H1 (cell line): ENCODE measurements at regions of chr6 and their contacts with region 1.

Region 1: GRCh38 chr6:33694401-33694931 is 17.0 kb downstream of the UQCC2 start:
- DNase-seq: no peak
- H3K4me3 ChIP-seq: no peak overlapping the region
- H3K27ac ChIP-seq: no peak overlapping the region
- H3K4me1 ChIP-seq: peaks cover 0 to 10% (median 1%) of the 10 kb centered on the region in 4 experiments; a peak in 4 of 7 replicates
- H3K27me3 ChIP-seq: no peaks in the 10 kb centered on the region
- CTCF ChIP-seq: no peak
- EP300 ChIP-seq: no peak
- POLR2A ChIP-seq: no peak; a peak in 1 of 3 replicates
- RAD21 ChIP-seq: no peak

Region 2: DNA sequence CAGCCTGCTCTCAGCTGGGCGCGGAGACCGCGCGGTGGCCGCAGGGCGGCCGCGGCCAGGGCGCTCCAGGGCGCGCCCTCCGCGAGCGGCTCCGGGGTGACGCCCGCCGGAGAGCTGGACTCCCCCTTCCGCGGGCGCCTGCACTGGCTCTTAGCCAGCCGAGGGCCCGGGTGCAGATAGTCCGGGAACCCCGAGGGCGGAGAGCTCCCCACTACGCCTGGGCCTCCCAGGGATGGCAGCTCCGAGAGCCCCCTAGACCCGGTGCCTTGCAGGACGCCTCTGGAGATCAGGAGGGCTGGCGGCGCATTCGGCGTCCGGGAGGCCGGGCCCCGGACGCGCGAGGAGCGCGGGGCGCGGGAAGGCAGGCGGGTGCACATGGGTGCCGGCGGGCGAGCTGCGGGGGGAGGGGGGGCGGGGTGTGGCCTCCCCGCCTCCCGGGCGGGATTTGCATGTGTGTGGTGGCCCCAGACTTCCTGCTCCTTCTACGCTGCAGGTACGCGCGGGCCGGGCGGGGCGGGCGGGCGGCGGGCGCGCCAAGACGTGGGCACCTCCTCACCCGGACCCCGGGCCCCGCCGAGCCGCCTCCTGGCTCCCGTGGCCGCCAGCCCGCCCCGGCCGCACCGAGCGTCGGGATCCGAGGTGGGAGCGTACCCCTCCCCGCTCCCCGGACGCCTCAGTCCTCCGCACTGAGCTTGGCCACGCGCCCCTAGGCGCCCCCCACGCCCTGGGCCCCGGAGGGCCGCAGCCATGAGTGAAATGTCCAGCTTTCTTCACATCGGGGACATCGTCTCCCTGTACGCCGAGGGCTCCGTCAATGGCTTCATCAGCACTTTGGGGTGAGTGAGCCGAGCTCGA is 73.4 kb before region 1 on chr6 and contains the start of gene ITPR3:
- CTCF ChIA-PET with region 1: no interaction called
- POLR2A ChIA-PET with region 1: interaction called, 10 read pairs
- DNase-seq: peak in 1 of 2 experiments; percentile 79
- H3K4me3 ChIP-seq: peak within 1 kb of the TSS; percentile 70 to 85 (median 80)
- H3K27ac ChIP-seq: no peak within 1 kb of the TSS
- H3K4me1 ChIP-seq: peaks cover 6 to 15% (median 11%) of the 10 kb centered on the region in 4 experiments
- H3K27me3 ChIP-seq: peaks cover 0 to 3% (median 1%) of the 10 kb centered on the region in 4 experiments; a peak in 3 of 7 replicates
- CTCF ChIP-seq: no peak
- EP300 ChIP-seq: no peak
- POLR2A ChIP-seq: no peak
- RAD21 ChIP-seq: no peak
- total RNA-seq, gene ITPR3: 44.9 and 45.7 TPM in 2 replicates

Region 3: GRCh38 chr6:33665957-33666356 is 28.5 kb before region 1 on chr6:
- CTCF ChIA-PET with region 1: interaction called, 13 read pairs
- POLR2A ChIA-PET with region 1: interaction called, 3 read pairs
- DNase-seq: no peak
- H3K4me3 ChIP-seq: no peak overlapping the region
- H3K27ac ChIP-seq: no peak overlapping the region
- H3K4me1 ChIP-seq: peaks cover 0 to 3% (median 0%) of the 10 kb centered on the region in 4 experiments; a peak in 1 of 7 replicates
- H3K27me3 ChIP-seq: no peaks in the 10 kb centered on the region
- CTCF ChIP-seq: peak in 2 of 3 experiments; percentile 27 to 51; a peak in 3 of 4 replicates
- EP300 ChIP-seq: no peak
- POLR2A ChIP-seq: no peak
- RAD21 ChIP-seq: peak; percentile 7 to 39; a peak in 2 of 4 replicates

Region 4: DNA sequence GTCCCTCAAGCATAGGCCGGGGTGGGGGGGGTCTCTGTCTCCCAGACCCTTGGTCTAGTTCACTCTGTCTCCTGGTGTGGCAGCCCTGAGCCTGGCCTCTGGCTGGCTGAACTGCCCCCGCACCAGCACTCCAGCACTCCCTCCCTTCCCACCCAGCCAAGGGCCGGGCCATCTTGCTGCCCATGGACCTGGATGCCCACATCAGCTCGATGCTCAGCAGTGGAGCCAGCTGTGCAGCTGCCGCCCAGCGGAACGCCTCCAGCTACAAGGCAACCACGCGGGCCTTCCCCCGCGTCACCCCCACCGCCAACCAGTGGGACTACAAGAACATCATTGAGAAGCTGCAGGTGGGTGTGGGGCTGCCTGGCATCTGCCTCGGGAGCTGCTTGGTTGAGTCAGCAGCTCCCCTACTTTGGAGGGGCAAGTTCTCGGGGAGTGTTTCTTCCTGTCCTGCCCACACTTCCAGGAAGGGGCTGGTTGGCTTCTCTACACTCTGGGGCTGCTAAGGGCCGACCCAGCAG is 11.4 kb before region 1 on chr6:
- CTCF ChIA-PET with region 1: interaction called, 16 read pairs
- POLR2A ChIA-PET with region 1: interaction called, 6 read pairs
- DNase-seq: no peak
- H3K4me3 ChIP-seq: no peak overlapping the region
- H3K27ac ChIP-seq: no peak overlapping the region
- H3K4me1 ChIP-seq: no peaks in the 10 kb centered on the region
- H3K27me3 ChIP-seq: no peaks in the 10 kb centered on the region
- CTCF ChIP-seq: no peak
- EP300 ChIP-seq: no peak
- POLR2A ChIP-seq: no peak
- RAD21 ChIP-seq: no peak

Region 5: GRCh38 chr6:33711140-33712129 is 17.0 kb after region 1 on chr6 and contains the start of gene UQCC2:
- CTCF ChIA-PET with region 1: interaction called, 9 read pairs
- POLR2A ChIA-PET with region 1: interaction called, 16 read pairs
- DNase-seq: peak; percentile 93 to 96
- H3K4me3 ChIP-seq: peak within 1 kb of the TSS; percentile 59 to 86 (median 77)
- H3K27ac ChIP-seq: peak within 1 kb of the TSS; percentile 98
- H3K4me1 ChIP-seq: peaks cover 2 to 14% (median 6%) of the 10 kb centered on the region in 4 experiments; a peak in 4 of 7 replicates
- H3K27me3 ChIP-seq: no peaks in the 10 kb centered on the region
- CTCF ChIP-seq: peak; percentile 62 to 76 (median 64)
- EP300 ChIP-seq: no peak
- POLR2A ChIP-seq: peak; percentile 78 to 92
- RAD21 ChIP-seq: peak; percentile 80 to 82
- total RNA-seq, gene UQCC2: 104 and 107 TPM in 2 replicates